Activated T-helper 1 cell treated with anti-CD3 and anti-CD28 coated beads, Interleukin-12 subunit alpha, Interleukin-12 subunit beta, Interleukin-2, Interleukin-4 antibody, amounts not matched to agents 30 ng/mL and 10 ng/mL and 1 ng/mL, durations not matched to agents 14 hours and 24 hours and 36 hours (primary cell): ENCODE measurements at regions of chr11 and their contacts with region 1.

Region 1: GRCh38 chr11:134223836-134224709 is at the starts of genes NCAPD3 and VPS26B:
- DNase-seq: peak; percentile 94
- H3K4me3 Mint-ChIP-seq: peak within 1 kb of the TSS; percentile 98
- H3K27ac Mint-ChIP-seq: peak within 1 kb of the TSS; percentile 99
- H3K4me1 Mint-ChIP-seq: peaks cover 63% of the 10 kb centered on the region
- H3K27me3 Mint-ChIP-seq: no peaks in the 10 kb centered on the region
- total RNA-seq, gene NCAPD3: 103 and 107 TPM in 2 replicates
- total RNA-seq, gene VPS26B: 43.0 and 43.2 TPM in 2 replicates

Region 2: DNA sequence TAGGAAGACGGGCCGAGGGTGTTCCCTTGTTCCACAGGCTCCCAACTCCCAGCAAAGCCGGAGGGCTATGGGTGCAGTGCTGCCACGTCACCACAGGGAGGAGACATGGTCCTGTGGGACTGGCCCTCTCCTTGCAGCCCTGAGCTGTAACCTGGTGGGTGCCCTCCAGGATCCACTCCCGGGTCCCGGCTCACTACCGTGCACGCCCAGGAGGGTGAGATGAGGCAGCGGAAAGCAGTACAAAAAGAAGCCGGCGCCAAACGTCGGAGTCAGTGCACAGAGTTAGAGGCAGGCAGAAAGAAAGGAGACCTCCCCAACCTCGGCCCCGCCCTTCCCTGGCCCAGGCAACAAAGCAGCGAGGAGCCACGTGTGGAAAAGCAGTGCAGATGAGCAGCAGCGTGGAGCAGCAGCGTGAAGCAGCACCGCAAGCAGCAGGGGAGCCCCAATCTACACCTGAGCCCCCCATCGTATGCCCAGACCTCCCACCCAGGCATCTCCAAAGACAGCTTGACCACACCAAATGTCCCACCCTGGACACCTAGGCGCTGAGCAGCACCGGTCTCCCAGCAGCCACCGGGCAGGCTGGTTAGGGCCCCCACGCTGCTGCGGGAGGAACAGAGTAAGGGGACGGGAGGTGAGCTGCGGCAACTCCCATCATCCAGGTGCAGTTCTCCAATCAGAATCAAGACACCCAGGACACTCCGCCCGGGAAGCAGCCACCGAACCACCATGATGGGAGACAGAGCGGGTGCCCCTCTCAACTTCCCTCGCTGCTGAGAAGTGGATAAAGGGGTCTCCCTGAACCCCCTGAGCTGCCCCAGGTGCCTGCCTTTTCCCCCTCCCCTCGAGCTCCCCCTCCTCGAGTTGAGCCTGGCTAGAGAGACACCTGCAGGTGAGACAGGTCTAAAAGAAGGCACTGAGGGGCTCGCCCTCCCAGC is 296.1 kb before region 1 on chr11:
- intact Hi-C with region 1: loop called (anchors 1 kb)
- DNase-seq: peak; percentile 59
- H3K4me3 Mint-ChIP-seq: peak overlapping the region; percentile 79
- H3K27ac Mint-ChIP-seq: peak overlapping the region; percentile 80
- H3K4me1 Mint-ChIP-seq: peaks cover 31% of the 10 kb centered on the region
- H3K27me3 Mint-ChIP-seq: no peaks in the 10 kb centered on the region

Region 3: DNA sequence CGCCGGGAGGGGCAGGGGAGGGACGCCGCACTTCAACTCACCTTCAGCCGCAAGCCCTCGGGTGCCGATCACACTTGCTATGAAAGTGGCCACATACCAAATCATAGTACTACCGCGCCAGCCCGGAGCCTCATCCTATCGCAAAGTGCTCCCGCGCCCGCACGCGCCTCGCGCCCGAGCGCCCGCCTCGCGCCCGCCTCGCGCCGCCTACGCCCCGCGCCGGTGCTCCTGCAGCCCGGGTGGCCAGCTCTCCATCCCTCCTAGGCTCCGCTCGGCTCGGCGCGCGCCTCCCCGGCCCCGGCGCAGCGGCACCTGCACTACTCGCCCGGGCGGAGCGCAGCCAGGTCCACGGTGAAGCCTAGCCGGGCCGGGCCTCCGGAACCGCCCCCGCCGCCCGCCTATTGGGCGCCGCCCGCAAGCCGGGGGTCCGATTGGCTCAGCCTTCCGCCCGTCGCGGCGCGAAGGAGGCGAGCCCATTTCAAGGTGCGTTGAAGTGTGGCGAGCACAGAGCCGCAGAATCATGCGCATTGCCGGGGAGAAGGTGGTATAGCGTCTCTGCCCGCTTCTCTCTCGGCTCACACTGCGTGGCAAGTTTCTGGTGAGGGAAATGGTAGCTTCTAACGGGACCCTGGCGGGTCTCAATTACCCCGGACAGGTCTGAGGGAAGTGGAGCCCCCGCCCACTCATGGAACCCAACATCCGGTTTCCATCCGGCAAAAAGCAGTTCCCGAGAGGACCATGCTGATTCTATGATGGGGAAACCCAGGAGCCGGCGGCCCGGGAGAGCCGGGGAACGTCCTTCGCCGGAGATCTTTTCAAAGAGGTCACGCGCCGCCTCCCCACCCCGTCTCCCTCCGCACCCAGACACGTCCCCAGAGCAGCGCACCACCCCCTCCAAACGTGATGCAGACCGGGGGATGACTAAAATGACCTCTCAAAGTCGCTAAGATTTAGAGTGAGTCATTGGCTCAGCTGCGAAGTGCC is 267.1 kb before region 1 on chr11 and contains the start of gene IGSF9B:
- intact Hi-C with region 1: loop called (anchors 2 kb)
- DNase-seq: peak; percentile 92
- H3K4me3 Mint-ChIP-seq: peak within 1 kb of the TSS; percentile 88
- H3K27ac Mint-ChIP-seq: peak within 1 kb of the TSS; percentile 89
- H3K4me1 Mint-ChIP-seq: peaks cover 47% of the 10 kb centered on the region
- H3K27me3 Mint-ChIP-seq: peaks cover 17% of the 10 kb centered on the region
- total RNA-seq, gene IGSF9B: 73.6 and 77.2 TPM in 2 replicates

Region 4: DNA sequence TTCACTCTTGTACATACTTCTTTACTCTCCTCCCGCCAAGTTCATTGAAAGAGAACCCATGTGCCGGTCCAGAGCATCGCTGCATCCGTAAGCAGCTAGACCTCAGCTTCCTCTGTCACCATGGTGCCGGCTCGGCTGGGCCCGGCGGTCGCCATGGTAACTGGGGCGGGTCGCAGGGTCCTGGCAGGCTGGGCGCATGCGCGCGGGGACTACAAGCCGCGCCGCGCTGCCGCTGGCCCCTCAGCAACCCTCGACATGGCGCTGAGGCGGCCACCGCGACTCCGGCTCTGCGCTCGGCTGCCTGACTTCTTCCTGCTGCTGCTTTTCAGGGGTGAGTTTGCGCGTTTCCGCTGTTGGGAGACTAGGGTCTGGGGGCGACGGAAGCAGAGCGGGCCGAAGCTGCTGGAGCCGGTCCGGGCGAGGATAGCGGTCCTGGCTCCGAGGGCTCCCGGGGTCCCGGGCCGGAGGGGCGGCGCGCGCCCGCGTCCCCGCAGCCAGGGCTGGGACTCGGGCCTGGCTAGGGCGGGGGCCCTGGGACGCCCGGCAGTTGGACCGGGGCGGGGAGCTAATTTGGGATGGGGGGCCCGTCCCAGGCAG is 155.1 kb before region 1 on chr11 and contains the start of gene JAM3:
- intact Hi-C with region 1: loop called (anchors 2 kb)
- DNase-seq: peak; percentile 97
- H3K4me3 Mint-ChIP-seq: peak within 1 kb of the TSS; percentile 88
- H3K27ac Mint-ChIP-seq: peak within 1 kb of the TSS; percentile 86
- H3K4me1 Mint-ChIP-seq: peaks cover 8% of the 10 kb centered on the region
- H3K27me3 Mint-ChIP-seq: peaks cover 59% of the 10 kb centered on the region
- total RNA-seq, gene JAM3: 3.5 and 3.9 TPM in 2 replicates

Region 5: GRCh38 chr11:134244655-134245054 is 20.6 kb after region 1 on chr11:
- intact Hi-C with region 1: loop called (anchors 1 kb)
- DNase-seq: no peak
- H3K4me3 Mint-ChIP-seq: no peak overlapping the region
- H3K27ac Mint-ChIP-seq: no peak overlapping the region
- H3K4me1 Mint-ChIP-seq: peaks cover 12% of the 10 kb centered on the region
- H3K27me3 Mint-ChIP-seq: no peaks in the 10 kb centered on the region

Region 6: DNA sequence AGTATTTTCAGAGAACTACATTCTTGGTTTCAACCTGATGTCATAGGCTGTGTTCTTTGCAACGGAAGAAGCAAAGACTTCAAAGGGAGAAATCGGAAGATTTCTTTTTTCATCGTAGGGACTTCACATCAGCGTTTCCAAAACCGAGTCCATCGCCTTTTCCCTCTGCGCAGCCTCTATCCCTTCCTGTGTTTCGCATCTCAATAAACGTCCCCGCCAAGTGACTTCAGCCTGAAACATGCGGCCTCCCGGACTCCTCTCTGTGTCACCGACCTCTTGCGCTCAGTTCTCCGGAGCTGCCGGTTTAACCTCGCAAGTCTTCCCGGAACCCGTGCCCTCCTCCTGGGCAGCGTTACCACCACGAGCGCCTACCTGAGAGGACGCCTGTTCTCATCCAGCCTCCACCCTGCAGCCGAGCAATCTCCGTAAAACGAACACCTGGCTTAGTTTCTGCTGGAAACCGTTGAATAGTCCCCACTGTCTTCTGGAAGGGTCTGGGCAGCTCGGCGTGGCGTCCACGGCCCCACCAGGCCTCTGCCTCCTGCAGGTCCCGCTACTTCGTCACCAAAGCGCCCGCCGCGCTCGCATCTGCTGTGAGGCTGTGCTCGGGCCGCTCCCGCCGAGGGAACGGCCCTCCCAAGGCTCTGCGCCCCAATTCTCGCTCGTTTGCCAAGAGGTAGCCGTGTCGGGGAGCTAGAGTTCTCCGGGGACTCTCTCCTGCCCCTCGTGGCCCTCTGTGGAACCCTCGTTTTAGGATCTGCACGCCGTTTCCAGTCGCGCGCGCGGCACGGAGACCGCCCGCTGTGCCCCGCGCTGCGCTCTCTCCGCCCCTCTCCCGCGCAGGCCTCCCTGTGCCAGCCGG is 51.7 kb after region 1 on chr11 and contains the start of gene GLB1L3:
- intact Hi-C with region 1: loop called (anchors 1 kb)
- DNase-seq: peak; percentile 81
- H3K4me3 Mint-ChIP-seq: peak within 1 kb of the TSS; percentile 96
- H3K27ac Mint-ChIP-seq: peak within 1 kb of the TSS; percentile 93
- H3K4me1 Mint-ChIP-seq: peaks cover 53% of the 10 kb centered on the region
- H3K27me3 Mint-ChIP-seq: peaks cover 2% of the 10 kb centered on the region
- total RNA-seq, gene GLB1L3: 14.6 and 16.1 TPM in 2 replicates